ENCODE measurements at regions of chr2 and their contacts with region 1.

Region 1: GRCh38 chr2:71130113-71130904 is at the starts of genes MCEE and MPHOSPH10:
- DNase-seq: peak; percentile 79
- ATAC-seq: peak; percentile 94
- H3K4me3 Mint-ChIP-seq: no peak within 1 kb of the TSS
- H3K27ac Mint-ChIP-seq: no peak within 1 kb of the TSS
- H3K4me1 Mint-ChIP-seq: peaks cover 17% of the 10 kb centered on the region
- H3K27me3 Mint-ChIP-seq: no peaks in the 10 kb centered on the region
- CTCF ChIP-seq: no peak
- total RNA-seq, gene MCEE: 11.1 and 12.2 TPM in 2 replicates
- total RNA-seq, gene MPHOSPH10: 47.6 and 47.8 TPM in 2 replicates

Region 2: DNA sequence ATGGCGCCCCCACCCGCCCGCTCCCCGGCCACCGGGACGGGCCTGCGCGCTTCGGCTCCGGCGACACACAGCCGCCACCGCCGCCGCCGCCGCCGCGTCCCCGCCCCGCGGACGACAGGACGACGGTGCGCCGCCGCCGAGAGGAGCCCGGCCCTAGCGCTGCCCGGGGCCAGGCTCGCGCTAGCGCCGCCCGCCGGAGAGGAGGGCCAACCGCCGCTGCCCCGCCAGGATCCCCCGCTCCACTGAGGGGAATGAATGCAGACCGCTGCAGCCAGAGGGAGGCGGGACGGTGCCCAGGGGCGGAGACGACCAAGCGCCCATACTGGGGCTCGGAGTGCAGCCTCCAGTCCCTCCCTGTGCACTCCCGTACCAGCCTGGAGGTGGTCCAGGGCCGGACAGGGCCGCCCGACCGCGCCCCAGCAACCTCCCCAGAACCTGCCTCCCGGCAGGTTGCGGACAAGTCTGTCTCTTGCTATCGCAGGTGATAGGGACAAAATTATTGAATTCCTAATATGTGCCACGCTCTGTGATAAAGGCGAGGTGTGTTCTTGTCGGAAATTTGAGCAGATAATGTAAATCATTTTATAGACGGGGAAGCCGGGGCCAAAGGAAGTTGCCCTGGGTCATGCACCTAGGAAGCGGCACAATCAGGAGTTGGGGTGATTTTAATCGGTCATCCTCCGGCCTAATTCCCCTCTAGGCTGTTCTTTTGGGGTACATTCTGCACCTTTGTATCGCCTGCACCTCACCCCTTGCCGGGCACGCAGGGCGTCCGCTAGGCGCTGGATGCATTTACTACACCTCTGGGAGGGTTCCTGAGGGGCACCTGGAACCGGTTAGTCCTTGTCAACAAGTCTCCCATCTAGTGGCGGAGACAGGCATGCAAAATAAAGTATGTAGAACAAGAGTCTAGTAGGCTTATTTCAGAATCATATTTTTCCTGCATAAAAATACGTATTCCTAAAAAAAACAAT is 135.3 kb before region 1 on chr2 and contains the start of gene TEX261:
- CTCF ChIA-PET with region 1: no interaction called
- POLR2A ChIA-PET with region 1: no interaction called
- intact Hi-C with region 1: loop called (anchors 1 kb)
- DNase-seq: peak; percentile 96
- ATAC-seq: peak; percentile 96
- H3K4me3 Mint-ChIP-seq: peak within 1 kb of the TSS; percentile 96
- H3K27ac Mint-ChIP-seq: peak within 1 kb of the TSS; percentile 87
- H3K4me1 Mint-ChIP-seq: peaks cover 33% of the 10 kb centered on the region
- H3K27me3 Mint-ChIP-seq: no peaks in the 10 kb centered on the region
- CTCF ChIP-seq: no peak
- total RNA-seq, gene TEX261: 46.8 and 54.1 TPM in 2 replicates

Region 3: DNA sequence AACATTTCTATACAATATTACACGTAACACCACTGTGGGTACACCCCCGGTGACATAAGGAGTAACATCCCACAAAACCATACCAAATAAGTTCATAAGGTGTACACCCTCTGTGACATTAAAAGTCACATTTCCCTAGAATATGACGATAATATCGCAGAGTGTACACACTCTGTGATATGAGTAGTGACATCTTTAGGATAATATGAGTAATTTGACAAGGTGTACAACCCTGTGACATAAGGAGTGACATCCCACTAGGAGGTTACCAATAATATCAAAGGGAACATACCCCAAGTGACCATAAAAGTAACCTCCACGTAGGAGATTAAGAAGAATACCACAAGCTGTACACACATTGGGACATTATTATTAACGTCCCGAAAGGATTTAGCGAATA is 111.7 kb before region 1 on chr2:
- CTCF ChIA-PET with region 1: no interaction called
- POLR2A ChIA-PET with region 1: no interaction called
- intact Hi-C with region 1: loop called (anchors 1 kb)
- DNase-seq: no peak
- ATAC-seq: no peak
- H3K4me3 Mint-ChIP-seq: no peak overlapping the region
- H3K27ac Mint-ChIP-seq: no peak overlapping the region
- H3K4me1 Mint-ChIP-seq: peaks cover 5% of the 10 kb centered on the region
- H3K27me3 Mint-ChIP-seq: no peaks in the 10 kb centered on the region
- CTCF ChIP-seq: no peak

Region 4: GRCh38 chr2:71049365-71050360 is 80.6 kb before region 1 on chr2:
- CTCF ChIA-PET with region 1: no interaction called
- POLR2A ChIA-PET with region 1: interaction called, 13 read pairs
- intact Hi-C with region 1: loop called (anchors 1 kb)
- DNase-seq: no peak
- ATAC-seq: peak; percentile 82
- H3K4me3 Mint-ChIP-seq: no peak overlapping the region
- H3K27ac Mint-ChIP-seq: no peak overlapping the region
- H3K4me1 Mint-ChIP-seq: peaks cover 7% of the 10 kb centered on the region
- H3K27me3 Mint-ChIP-seq: no peaks in the 10 kb centered on the region
- CTCF ChIP-seq: no peak

Region 5: GRCh38 chr2:71226965-71227560 is 96.8 kb after region 1 on chr2 and contains the start of gene PAIP2B:
- CTCF ChIA-PET with region 1: no interaction called
- POLR2A ChIA-PET with region 1: interaction called, 7 read pairs
- intact Hi-C with region 1: loop called (anchors 1 kb)
- DNase-seq: peak; percentile 89
- ATAC-seq: peak; percentile 92
- H3K4me3 Mint-ChIP-seq: peak within 1 kb of the TSS; percentile 99
- H3K27ac Mint-ChIP-seq: peak within 1 kb of the TSS; percentile 95
- H3K4me1 Mint-ChIP-seq: peaks cover 28% of the 10 kb centered on the region
- H3K27me3 Mint-ChIP-seq: peaks cover 9% of the 10 kb centered on the region
- CTCF ChIP-seq: no peak
- total RNA-seq, gene PAIP2B: 3.7 and 4.0 TPM in 2 replicates

Region 6: GRCh38 chr2:71276311-71277146 is 146.2 kb after region 1 on chr2:
- CTCF ChIA-PET with region 1: no interaction called
- POLR2A ChIA-PET with region 1: no interaction called
- intact Hi-C with region 1: loop called (anchors 1 kb)
- DNase-seq: peak; percentile 90
- ATAC-seq: peak; percentile 99
- H3K4me3 Mint-ChIP-seq: peak overlapping the region; percentile 84
- H3K27ac Mint-ChIP-seq: no peak overlapping the region
- H3K4me1 Mint-ChIP-seq: peaks cover 12% of the 10 kb centered on the region
- H3K27me3 Mint-ChIP-seq: peaks cover 47% of the 10 kb centered on the region
- CTCF ChIP-seq: no peak